Activated B cell treated with CpG ODN at 0.5 μM for 24 hours (primary cell): ENCODE measurements at regions of chr9 and their contacts with region 1.

Region 1: GRCh38 chr9:120755827-120756434 is 37.3 kb downstream of the FBXW2 start:
- DNase-seq: peak; percentile 26
- ATAC-seq: peak; percentile 85
- H3K4me3 Mint-ChIP-seq: no peak overlapping the region
- H3K27ac Mint-ChIP-seq: no peak overlapping the region
- H3K4me1 Mint-ChIP-seq: peaks cover 24% of the 10 kb centered on the region
- H3K27me3 Mint-ChIP-seq: no peaks in the 10 kb centered on the region
- CTCF ChIP-seq: peak; percentile 71

Region 2: DNA sequence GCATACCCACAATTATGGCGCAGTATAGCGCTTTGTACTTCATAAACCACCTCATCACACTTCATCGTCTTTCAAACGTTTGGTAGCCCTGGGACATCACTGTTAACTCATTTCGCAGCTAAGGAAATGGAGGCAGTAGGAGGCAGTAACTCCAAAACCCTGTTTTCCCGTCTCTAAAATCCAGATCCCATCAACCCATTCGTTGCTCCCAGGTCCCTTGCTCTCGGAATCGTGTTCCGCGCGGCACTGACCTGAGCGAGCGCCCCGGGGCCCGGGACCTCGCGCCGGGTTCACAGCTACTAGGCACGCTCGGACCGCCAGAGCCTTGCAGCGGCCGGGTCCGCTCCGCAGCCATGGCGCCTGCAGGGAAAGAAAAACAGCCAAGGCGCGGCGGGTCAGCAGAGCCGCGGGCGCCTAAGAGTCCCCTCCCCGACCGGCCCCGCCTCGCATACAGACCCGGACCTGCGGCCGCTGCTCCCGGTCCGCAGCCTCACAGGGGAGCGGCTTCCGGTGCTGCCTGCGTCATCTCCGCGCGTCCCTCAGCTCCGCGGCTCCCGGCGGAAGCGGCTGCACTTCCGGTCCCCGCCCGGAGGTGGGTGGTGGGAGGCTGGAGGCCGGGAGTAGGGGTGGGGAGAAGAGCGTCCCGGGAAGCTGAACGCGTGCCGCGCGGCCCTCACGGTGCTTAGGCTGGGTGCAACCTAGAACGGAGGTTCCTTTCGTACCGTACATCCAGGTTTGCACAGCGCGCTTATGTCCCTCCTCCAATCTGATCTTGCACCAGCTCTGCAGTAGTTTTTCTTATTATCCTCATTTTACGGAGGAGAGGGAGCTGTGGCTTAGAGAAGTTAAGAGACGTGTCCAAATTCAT is 37.2 kb after region 1 on chr9 and contains the start of gene FBXW2:
- CTCF ChIA-PET with region 1: no interaction called
- POLR2A ChIA-PET with region 1: interaction called, 15 read pairs
- intact Hi-C with region 1: loop called (anchors 1 kb)
- DNase-seq: peak; percentile 87
- ATAC-seq: peak; percentile 91
- H3K4me3 Mint-ChIP-seq: peak within 1 kb of the TSS; percentile 91
- H3K27ac Mint-ChIP-seq: peak within 1 kb of the TSS; percentile 89
- H3K4me1 Mint-ChIP-seq: peaks cover 38% of the 10 kb centered on the region
- H3K27me3 Mint-ChIP-seq: no peaks in the 10 kb centered on the region
- CTCF ChIP-seq: no peak
- total RNA-seq, gene FBXW2: 70.4 and 77.9 TPM in 2 replicates

Region 3: GRCh38 chr9:120985810-120986222 is 229.9 kb after region 1 on chr9:
- CTCF ChIA-PET with region 1: interaction called, 34 read pairs
- POLR2A ChIA-PET with region 1: no interaction called
- intact Hi-C with region 1: loop called (anchors 2 kb)
- DNase-seq: no peak
- ATAC-seq: no peak
- H3K4me3 Mint-ChIP-seq: no peak overlapping the region
- H3K27ac Mint-ChIP-seq: no peak overlapping the region
- H3K4me1 Mint-ChIP-seq: no peaks in the 10 kb centered on the region
- H3K27me3 Mint-ChIP-seq: no peaks in the 10 kb centered on the region
- CTCF ChIP-seq: no peak

Region 4: DNA sequence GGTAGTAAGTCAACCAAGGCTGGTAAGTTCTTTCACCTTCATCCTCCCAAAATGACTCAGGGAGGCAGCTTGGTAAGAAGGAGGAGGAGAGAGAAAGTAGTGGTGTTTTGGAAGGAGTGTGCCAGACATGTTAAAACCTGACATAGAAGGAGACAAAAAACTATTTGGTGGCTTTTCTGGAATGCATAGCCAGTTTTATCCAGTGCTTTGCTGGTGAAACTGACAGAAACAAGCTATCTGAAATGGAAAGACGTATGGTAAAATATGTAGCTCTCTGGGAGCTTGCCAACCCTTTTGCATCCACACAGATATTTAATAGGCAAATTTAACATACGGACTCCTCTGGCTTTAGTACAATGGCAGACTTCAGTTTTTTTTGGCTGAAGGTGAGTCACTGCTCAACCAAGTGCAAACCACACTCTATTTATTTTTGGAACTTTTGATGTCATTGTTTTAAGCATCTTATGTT is 400.4 kb after region 1 on chr9:
- CTCF ChIA-PET with region 1: no interaction called
- POLR2A ChIA-PET with region 1: no interaction called
- intact Hi-C with region 1: loop called (anchors 5 kb)
- DNase-seq: no peak
- ATAC-seq: peak; percentile 87
- H3K4me3 Mint-ChIP-seq: peak overlapping the region; percentile 67
- H3K27ac Mint-ChIP-seq: peak overlapping the region; percentile 92
- H3K4me1 Mint-ChIP-seq: peaks cover 67% of the 10 kb centered on the region
- H3K27me3 Mint-ChIP-seq: no peaks in the 10 kb centered on the region
- CTCF ChIP-seq: no peak

Region 5: DNA sequence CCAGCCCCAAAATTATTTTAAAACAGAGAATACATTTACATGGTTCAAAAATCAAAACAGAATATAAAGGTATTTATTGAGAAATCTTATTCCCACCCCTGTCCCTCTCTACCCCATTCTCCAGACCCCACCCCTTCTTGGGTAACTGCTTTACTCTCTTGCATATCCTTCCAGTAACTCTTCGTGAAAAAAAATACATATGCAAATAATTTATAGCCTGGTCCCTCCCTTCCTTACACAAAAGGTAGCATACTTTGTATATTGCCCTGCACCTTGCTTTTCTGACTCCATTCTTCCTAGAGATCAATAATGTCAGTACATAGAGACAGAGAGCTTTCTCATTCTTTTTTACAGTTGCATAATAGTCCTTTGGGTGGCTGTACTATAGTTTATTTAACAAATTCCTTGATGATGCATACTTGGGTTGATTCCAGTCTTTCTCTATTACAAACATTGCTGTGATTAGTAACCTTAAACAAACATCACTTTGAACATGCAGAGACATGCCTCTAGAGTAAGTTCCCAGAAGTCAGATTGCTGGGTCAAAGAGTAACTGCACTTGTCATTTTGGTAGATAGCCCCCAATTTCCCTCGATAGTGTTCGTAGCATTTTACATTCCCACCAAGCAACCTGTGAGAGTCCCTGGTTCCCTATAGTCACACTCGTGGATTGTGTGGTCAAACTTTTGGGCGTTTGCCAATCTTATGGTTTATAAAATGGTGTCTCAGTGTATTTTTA is 566.3 kb after region 1 on chr9:
- CTCF ChIA-PET with region 1: interaction called, 7 read pairs
- POLR2A ChIA-PET with region 1: no interaction called
- intact Hi-C with region 1: loop called (anchors 1 kb)
- DNase-seq: no peak
- ATAC-seq: no peak
- H3K4me3 Mint-ChIP-seq: no peak overlapping the region
- H3K27ac Mint-ChIP-seq: no peak overlapping the region
- H3K4me1 Mint-ChIP-seq: no peaks in the 10 kb centered on the region
- H3K27me3 Mint-ChIP-seq: no peaks in the 10 kb centered on the region
- CTCF ChIP-seq: no peak

Region 6: GRCh38 chr9:121498150-121498486 is 742.2 kb after region 1 on chr9:
- CTCF ChIA-PET with region 1: no interaction called
- POLR2A ChIA-PET with region 1: no interaction called
- intact Hi-C with region 1: loop called (anchors 5 kb)
- DNase-seq: peak; percentile 22
- ATAC-seq: peak; percentile 87
- H3K4me3 Mint-ChIP-seq: peak overlapping the region; percentile 79
- H3K27ac Mint-ChIP-seq: no peak overlapping the region
- H3K4me1 Mint-ChIP-seq: peaks cover 45% of the 10 kb centered on the region
- H3K27me3 Mint-ChIP-seq: peaks cover 28% of the 10 kb centered on the region
- CTCF ChIP-seq: no peak